Heart left ventricle (tissue), 16 donors: ENCODE measurements at regions of chr5 and their contacts with region 1.

Region 1: GRCh38 chr5:110441035-110441434 is 285.4 kb downstream of the TMEM232 start:
- DNase-seq: no peak
- ATAC-seq: peak in 1 of 4 donors; percentile 47
- H3K4me3 ChIP-seq: no peak overlapping the region
- H3K27ac ChIP-seq: no peak overlapping the region
- H3K4me1 ChIP-seq: peaks cover 0 to 10% (median 0%) of the 10 kb centered on the region in 12 donors
- H3K27me3 ChIP-seq: no peaks in the 10 kb centered on the region
- CTCF ChIP-seq: peak in 3 of 12 donors; percentile 22 to 30 (median 24)
- POLR2A ChIP-seq: no peak

Region 2: GRCh38 chr5:110401881-110402280 is 39.2 kb before region 1 on chr5:
- intact Hi-C with region 1: loop called in 1 of 10 experiments (anchors 2 kb)
- DNase-seq: no peak
- ATAC-seq: no peak
- H3K4me3 ChIP-seq: no peak overlapping the region
- H3K27ac ChIP-seq: no peak overlapping the region
- H3K4me1 ChIP-seq: peaks cover 0 to 2% (median 0%) of the 10 kb centered on the region in 12 donors
- H3K27me3 ChIP-seq: no peaks in the 10 kb centered on the region
- CTCF ChIP-seq: no peak
- POLR2A ChIP-seq: no peak

Region 3: DNA sequence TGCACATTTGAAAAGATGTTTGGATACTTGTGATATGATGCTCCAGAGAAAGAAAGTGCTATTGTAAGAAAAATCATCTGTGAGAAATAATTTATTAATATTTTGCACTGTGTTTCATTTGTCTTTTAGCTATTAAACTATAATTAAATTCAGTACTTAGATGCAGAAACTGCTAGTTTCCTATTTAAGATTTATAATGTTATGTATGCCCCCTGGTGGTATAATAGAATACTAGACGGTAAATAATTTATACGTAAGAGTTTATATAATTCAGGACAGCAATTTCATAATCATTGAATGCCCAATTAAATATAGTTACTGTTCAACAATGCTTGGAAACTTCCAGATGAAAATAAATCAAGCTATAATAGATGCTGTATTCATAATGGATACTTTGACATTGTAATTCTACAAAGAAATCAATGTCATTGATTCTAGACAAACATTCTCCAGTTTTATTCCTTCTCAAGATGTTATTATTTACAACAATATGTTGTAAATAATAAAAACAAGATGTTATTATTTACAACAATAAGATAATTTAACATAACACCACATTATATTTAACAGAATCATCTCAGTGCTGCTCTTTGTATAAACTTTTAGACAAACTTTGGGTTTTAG is 184.5 kb after region 1 on chr5:
- intact Hi-C with region 1: loop called in 1 of 10 experiments (anchors 5 kb)
- DNase-seq: no peak
- ATAC-seq: no peak
- H3K4me3 ChIP-seq: no peak overlapping the region
- H3K27ac ChIP-seq: no peak overlapping the region
- H3K4me1 ChIP-seq: no peaks in the 10 kb centered on the region
- H3K27me3 ChIP-seq: no peaks in the 10 kb centered on the region
- CTCF ChIP-seq: peak; percentile 33 to 66 (median 52)
- POLR2A ChIP-seq: no peak